Calu3 (cell line): ENCODE measurements at regions of chr1 and their contacts with region 1.

Region 1: GRCh38 chr1:36635284-36635683 is 152.6 kb upstream of the CSF3R start:
- DNase-seq: no peak
- H3K4me3 Mint-ChIP-seq: no peak overlapping the region
- H3K27ac Mint-ChIP-seq: no peak overlapping the region
- H3K4me1 Mint-ChIP-seq: no peaks in the 10 kb centered on the region
- H3K27me3 Mint-ChIP-seq: peaks cover 82% of the 10 kb centered on the region
- CTCF ChIP-seq: no peak

Region 2: DNA sequence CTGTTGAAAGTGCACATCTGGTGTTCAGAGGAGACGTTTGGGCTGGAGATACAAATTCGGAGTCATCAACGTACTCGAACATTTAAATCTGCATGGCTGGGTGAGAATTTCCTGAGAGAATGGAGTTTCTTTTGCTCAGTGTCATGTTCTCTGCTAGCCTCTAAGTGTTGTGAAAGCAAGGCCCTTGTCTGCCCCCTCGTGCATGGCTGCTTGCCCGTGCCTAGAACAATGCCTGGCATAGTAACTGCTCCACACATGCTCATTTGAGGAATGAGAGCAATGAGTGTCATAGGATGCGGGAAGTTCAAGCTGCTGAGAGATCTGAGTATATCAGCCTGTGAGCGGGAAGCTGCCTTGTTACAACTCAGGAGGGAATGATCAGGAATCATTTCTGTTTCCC is 18.6 kb after region 1 on chr1:
- CTCF ChIA-PET with region 1: no interaction called
- intact Hi-C with region 1: loop called (anchors 2 kb)
- DNase-seq: no peak
- H3K4me3 Mint-ChIP-seq: no peak overlapping the region
- H3K27ac Mint-ChIP-seq: no peak overlapping the region
- H3K4me1 Mint-ChIP-seq: no peaks in the 10 kb centered on the region
- H3K27me3 Mint-ChIP-seq: peaks cover 96% of the 10 kb centered on the region
- CTCF ChIP-seq: no peak